Panc1 (cell line): ENCODE measurements at regions of chr2 and their contacts with region 1.

Region 1: GRCh38 chr2:42733852-42734251 is 30.1 kb downstream of the OXER1 start:
- DNase-seq: no peak
- ATAC-seq: no peak
- H3K4me3 ChIP-seq: no peak overlapping the region
- H3K27ac ChIP-seq: no peak overlapping the region
- H3K4me1 ChIP-seq: no peaks in the 10 kb centered on the region
- H3K27me3 ChIP-seq: no peaks in the 10 kb centered on the region
- CTCF ChIP-seq: no peak

Region 2: DNA sequence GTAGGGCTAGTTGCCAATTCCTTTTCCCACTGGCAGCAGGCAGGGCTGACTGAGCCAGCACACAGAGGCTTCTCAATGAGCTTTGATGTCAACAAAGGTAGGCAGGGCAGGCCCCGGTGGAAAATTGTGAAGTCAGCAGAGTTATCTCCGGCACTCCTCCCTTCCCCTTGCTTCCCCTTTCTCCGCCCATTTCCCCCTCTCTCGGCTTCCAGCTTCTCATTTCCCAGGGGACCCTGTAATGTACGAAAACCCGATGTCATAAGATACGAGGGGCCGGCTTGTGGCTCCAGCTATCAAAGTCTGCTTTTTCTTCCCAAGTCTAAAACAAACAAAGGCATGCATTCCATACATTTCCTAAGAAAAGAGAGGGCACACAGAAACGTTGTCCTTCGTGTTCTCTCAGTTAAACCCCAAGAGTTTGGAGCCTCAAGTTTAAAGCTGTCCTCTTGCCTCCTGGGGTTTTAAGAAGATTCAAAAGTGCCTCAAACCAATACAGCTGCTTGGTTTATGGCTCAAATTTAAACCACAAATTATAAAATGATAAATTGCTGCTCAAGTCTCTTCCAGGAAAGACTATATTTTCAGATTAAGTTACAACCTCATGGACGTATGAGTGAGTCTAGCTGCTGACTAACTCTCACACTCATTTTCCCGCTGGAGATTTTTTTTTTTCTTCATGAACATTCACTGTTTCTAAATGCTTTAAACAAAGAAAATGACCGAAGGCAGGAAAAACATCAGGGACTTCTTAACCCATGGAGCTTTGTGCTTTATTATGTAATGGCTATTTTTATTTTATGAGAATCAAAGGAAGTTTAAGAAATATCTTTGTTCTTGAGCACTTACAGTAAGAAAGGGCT is 591.9 kb before region 1 on chr2:
- CTCF ChIA-PET with region 1: no interaction called
- POLR2A ChIA-PET with region 1: no interaction called
- in situ Hi-C with region 1: no loop called
- intact Hi-C with region 1: no loop called
- DNase-seq: no peak
- ATAC-seq: peak; percentile 69
- H3K4me3 ChIP-seq: peak overlapping the region; percentile 26 to 50
- H3K27ac ChIP-seq: peak overlapping the region; percentile 99
- H3K4me1 ChIP-seq: peaks cover 67% of the 10 kb centered on the region
- H3K27me3 ChIP-seq: no peaks in the 10 kb centered on the region
- CTCF ChIP-seq: no peak

Region 3: GRCh38 chr2:42446503-42447271 is 287.2 kb before region 1 on chr2:
- CTCF ChIA-PET with region 1: interaction called, 10 read pairs
- POLR2A ChIA-PET with region 1: no interaction called
- in situ Hi-C with region 1: no loop called
- intact Hi-C with region 1: no loop called
- DNase-seq: no peak
- ATAC-seq: no peak
- H3K4me3 ChIP-seq: no peak overlapping the region
- H3K27ac ChIP-seq: no peak overlapping the region
- H3K4me1 ChIP-seq: no peaks in the 10 kb centered on the region
- H3K27me3 ChIP-seq: no peaks in the 10 kb centered on the region
- CTCF ChIP-seq: no peak